Testis (tissue), 5 donors: ENCODE measurements at regions of chr7 and their contacts with region 1.

Region 1: GRCh38 chr7:108002726-108003598 is at the start of gene LAMB1:
- DNase-seq: peak; percentile 70
- H3K4me3 ChIP-seq: peak within 1 kb of the TSS; percentile 61 to 69
- H3K27ac ChIP-seq: peak within 1 kb of the TSS; percentile 24 to 86
- H3K4me1 ChIP-seq: peaks cover 3% of the 10 kb centered on the region
- H3K27me3 ChIP-seq: no peaks in the 10 kb centered on the region
- CTCF ChIP-seq: no peak
- POLR2A ChIP-seq: no peak
- total RNA-seq, gene LAMB1: 42.0 to 65.2 TPM

Region 2: GRCh38 chr7:107890962-107891635 is 111.9 kb before region 1 on chr7 and contains the start of gene DLD:
- intact Hi-C with region 1: loop called (anchors 10 kb)
- DNase-seq: peak; percentile 96
- H3K4me3 ChIP-seq: peak within 1 kb of the TSS; percentile 79 to 84
- H3K27ac ChIP-seq: peak within 1 kb of the TSS; percentile 93 to 95
- H3K4me1 ChIP-seq: peaks cover 7% of the 10 kb centered on the region
- H3K27me3 ChIP-seq: no peaks in the 10 kb centered on the region
- CTCF ChIP-seq: peak in 1 of 3 experiments; percentile 21
- POLR2A ChIP-seq: peak; percentile 88
- total RNA-seq, gene DLD: 50.2 to 57.3 TPM